CD4-positive, alpha-beta memory T cell (primary cell): ENCODE measurements at regions of chr4 and their contacts with region 1.

Region 1: DNA sequence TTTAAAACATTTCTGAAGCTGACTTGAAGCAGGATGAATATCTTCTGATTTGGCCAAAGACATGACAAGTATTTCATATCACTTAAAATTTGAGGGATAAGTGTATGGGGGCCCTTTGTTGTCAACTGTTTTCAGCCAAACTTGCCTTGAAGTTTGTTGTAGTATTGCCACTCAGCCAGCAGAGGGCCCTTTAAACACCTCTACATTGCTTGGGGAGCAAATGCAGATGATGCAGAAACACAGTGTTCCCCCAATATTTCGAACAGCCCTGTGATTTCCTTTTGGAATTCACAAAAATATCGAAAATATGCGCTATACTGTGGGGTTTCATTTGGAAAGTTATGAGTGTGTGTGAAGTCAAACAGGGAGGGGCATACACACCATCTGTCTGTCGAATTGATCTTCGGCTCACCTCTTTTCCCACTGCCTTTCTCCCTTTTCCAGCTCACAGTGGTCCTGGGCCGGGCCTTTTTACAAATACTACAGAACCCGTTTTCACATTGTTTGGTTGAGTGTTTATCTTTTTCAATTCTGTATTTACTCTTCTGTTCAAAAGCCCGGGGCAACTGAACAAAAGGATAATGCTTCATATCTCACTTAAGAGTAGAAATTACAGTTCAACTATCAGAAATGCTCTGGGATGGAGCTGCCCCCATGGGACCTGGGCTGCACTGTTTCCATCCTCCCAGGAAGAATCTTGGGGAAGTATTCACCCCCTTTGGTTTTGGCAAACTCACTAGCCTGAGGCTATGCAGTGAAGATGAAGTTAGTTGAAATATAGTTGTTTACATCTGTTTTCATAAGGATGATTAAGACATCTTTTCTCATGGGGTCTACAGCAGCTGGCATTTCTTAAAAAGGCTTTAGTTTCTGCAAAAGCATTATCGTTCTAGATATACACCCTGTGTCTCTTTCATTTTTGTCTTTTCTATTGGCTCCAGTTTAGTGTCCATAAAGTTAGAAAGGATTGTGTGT is 137.6 kb downstream of the EGF start:
- DNase-seq: peak; percentile 36 to 60 (median 50)
- H3K4me3 ChIP-seq: no peak overlapping the region
- H3K4me3 Mint-ChIP-seq: no peak overlapping the region
- H3K27ac ChIP-seq: no peak overlapping the region
- H3K27ac Mint-ChIP-seq: peak overlapping the region in 2 of 7 donors; percentile 25 to 71
- H3K4me1 ChIP-seq: no peaks in the 10 kb centered on the region
- H3K4me1 Mint-ChIP-seq: peaks cover 0 to 2% (median under 1%) of the 10 kb centered on the region in 4 donors
- H3K27me3 ChIP-seq: no peaks in the 10 kb centered on the region
- H3K27me3 Mint-ChIP-seq: no peaks in the 10 kb centered on the region

Region 2: DNA sequence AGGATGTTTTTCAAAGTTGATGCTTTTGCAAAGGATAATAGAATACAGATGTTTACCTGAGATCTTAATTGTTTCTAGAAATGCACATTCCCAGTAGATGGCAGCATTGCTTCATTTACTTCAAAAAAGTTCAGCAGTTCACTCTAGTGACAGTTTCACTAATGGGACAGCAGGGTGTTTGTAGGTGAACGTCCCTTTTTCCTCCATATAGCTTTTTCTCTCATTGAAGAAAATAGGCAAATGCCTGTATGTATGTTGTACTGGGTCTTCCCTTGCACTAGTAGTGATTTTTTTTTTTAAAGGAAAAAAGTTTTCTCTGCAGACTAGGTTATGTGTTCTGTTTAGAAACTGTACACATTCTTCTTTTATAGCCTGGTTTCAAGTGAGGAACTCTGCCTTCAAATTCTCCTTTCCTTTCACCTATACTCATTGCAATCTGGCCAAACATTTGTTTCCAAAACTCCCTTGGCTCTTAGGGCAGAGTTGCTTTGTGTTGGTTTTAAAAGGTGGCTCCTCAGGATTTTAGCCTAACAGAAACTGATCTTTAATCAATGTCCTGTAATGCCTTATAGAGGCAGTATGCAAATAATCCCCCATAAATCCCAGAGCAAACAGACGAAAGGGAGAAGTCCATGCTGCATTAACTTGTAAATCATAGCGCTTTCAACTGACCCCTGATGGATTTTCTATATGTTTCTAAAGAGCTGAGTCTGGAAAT is 51.2 kb before region 1 on chr4:
- CTCF ChIA-PET with region 1: interaction called, 11 read pairs
- POLR2A ChIA-PET with region 1: interaction called, 3 read pairs
- intact Hi-C with region 1: no loop called
- DNase-seq: peak in 4 of 5 donors; percentile 63 to 66 (median 65)
- H3K4me3 ChIP-seq: no peak overlapping the region
- H3K4me3 Mint-ChIP-seq: no peak overlapping the region
- H3K27ac ChIP-seq: no peak overlapping the region
- H3K27ac Mint-ChIP-seq: no peak overlapping the region
- H3K4me1 ChIP-seq: no peaks in the 10 kb centered on the region
- H3K4me1 Mint-ChIP-seq: peaks cover 1 to 8% (median 6%) of the 10 kb centered on the region in 4 donors
- H3K27me3 ChIP-seq: no peaks in the 10 kb centered on the region
- H3K27me3 Mint-ChIP-seq: peaks cover 9 to 11% of the 10 kb centered on the region in 2 donors

Region 3: DNA sequence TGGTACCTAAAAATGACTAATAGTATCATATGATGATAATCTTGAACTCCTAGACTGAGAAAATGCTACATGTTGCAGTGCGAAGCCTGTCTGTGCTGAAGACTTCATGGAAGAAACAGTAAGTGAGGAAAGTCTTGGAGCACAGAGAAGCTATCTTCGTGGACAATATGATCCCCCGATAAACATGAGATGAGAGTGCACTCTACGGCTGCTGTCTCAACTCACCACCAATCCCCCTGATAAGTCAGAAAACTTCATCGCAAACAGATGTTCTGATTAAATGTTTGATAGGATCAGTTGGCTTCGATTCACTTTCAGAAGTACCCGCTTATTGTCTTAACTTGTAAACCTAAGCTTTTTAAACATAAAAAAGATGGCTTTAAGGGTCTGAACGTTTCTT is 18.0 kb after region 1 on chr4:
- CTCF ChIA-PET with region 1: interaction called, 12 read pairs
- POLR2A ChIA-PET with region 1: no interaction called
- intact Hi-C with region 1: no loop called
- DNase-seq: no peak
- H3K4me3 ChIP-seq: no peak overlapping the region
- H3K4me3 Mint-ChIP-seq: no peak overlapping the region
- H3K27ac ChIP-seq: no peak overlapping the region
- H3K27ac Mint-ChIP-seq: no peak overlapping the region
- H3K4me1 ChIP-seq: no peaks in the 10 kb centered on the region
- H3K4me1 Mint-ChIP-seq: no peaks in the 10 kb centered on the region
- H3K27me3 ChIP-seq: no peaks in the 10 kb centered on the region
- H3K27me3 Mint-ChIP-seq: no peaks in the 10 kb centered on the region

Region 4: DNA sequence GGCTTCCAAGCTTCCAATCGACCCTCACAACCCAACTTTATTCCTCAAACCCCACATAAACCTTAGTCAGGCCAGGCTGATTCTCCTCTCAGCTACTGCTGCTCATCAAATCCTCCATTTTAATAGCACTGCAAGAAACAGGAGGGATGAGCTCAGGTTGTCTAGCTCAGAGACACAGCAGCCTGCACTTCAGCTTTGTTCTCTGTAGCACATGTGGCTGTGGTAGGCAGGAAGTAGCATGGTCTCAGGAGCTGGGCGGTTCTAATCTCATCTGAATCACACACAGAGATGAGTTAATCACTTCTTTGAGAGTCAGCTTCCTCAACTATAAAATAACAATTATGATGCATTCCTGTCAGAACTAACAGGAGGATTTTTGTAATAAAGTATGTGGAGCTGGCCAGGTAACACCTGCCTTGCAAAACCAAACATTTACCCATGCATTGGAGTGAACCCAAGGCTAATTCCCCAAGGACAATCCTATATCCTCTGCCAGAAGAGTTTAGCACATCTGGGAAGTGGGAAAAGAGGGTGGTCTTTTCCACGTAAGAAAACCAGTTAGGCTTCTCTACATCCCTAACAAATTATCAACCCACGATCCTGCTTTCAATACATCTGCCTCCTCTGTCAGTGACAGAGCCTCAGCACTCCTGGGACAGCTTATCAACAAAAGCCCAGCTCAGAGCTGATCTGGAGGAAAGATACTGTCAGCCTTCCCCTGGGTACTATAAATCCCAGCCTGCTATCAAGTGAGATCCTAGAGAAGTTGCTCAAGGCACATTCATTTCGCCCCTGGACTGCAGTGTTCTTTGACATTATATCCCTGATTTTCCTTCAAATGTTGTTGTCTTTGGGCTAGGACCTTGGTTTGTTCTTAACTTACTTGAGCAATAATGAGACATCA is 115.4 kb after region 1 on chr4:
- CTCF ChIA-PET with region 1: interaction called, 24 read pairs
- POLR2A ChIA-PET with region 1: interaction called, 4 read pairs
- intact Hi-C with region 1: no loop called
- DNase-seq: peak; percentile 55 to 77 (median 65)
- H3K4me3 ChIP-seq: peak overlapping the region in 1 of 2 donors; percentile 9
- H3K4me3 Mint-ChIP-seq: peak overlapping the region; percentile 52 to 92 (median 71)
- H3K27ac ChIP-seq: peak overlapping the region; percentile 29
- H3K27ac Mint-ChIP-seq: peak overlapping the region; percentile 81 to 98 (median 93)
- H3K4me1 ChIP-seq: peaks cover 30% of the 10 kb centered on the region
- H3K4me1 Mint-ChIP-seq: peaks cover 23 to 40% (median 33%) of the 10 kb centered on the region in 4 donors
- H3K27me3 ChIP-seq: no peaks in the 10 kb centered on the region
- H3K27me3 Mint-ChIP-seq: no peaks in the 10 kb centered on the region

Region 5: DNA sequence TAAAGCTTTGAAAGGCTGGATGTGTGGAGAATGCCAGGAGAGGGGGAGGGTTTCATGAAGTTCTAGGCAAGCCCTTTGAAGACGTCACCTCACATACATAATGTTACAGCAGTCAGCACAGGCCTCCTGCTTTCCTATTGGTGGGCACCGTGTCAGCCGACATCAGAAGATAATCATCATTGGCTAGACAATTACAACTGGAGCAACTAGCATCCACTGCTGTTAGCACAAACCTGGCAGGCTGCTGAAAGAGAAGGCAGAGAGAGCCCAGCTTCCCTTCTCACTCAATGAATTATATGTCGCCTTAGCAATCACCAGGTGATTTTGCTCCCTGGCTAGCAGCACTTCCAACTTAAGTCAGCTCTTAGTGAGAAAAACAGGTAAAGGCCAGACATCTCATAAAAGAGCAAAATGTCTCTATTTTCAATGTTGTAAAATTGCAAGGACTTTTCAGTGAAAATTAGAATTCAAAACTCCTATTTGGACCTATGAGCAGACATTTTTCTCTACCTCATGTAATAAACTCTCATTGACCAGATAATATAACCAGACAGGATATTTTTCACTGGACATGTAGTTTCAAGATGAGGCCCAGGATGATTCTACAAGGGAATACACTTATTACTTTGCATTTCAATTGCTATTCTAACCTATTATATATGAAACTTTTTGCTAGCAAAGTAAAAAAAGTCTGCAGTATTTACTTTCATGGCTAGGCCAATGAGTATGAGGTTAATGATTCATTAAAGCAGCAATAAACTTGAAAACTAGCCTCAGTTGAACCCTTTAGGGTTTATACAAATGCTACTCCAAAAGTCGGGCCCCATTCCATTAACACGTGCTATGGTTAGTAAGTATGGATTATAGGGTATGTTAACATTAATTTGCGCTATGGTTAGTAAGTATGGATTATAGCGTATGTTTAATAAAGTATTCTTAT is 143.9 kb after region 1 on chr4:
- CTCF ChIA-PET with region 1: interaction called, 14 read pairs
- POLR2A ChIA-PET with region 1: no interaction called
- intact Hi-C with region 1: loop called (anchors 1 kb)
- DNase-seq: peak; percentile 71 to 87 (median 78)
- H3K4me3 ChIP-seq: no peak overlapping the region
- H3K4me3 Mint-ChIP-seq: peak overlapping the region in 6 of 8 donors; percentile 12 to 40 (median 31)
- H3K27ac ChIP-seq: peak overlapping the region; percentile 21
- H3K27ac Mint-ChIP-seq: peak overlapping the region; percentile 54 to 91 (median 84)
- H3K4me1 ChIP-seq: peaks cover 27% of the 10 kb centered on the region
- H3K4me1 Mint-ChIP-seq: peaks cover 17 to 43% (median 27%) of the 10 kb centered on the region in 4 donors
- H3K27me3 ChIP-seq: no peaks in the 10 kb centered on the region
- H3K27me3 Mint-ChIP-seq: no peaks in the 10 kb centered on the region

Region 6: DNA sequence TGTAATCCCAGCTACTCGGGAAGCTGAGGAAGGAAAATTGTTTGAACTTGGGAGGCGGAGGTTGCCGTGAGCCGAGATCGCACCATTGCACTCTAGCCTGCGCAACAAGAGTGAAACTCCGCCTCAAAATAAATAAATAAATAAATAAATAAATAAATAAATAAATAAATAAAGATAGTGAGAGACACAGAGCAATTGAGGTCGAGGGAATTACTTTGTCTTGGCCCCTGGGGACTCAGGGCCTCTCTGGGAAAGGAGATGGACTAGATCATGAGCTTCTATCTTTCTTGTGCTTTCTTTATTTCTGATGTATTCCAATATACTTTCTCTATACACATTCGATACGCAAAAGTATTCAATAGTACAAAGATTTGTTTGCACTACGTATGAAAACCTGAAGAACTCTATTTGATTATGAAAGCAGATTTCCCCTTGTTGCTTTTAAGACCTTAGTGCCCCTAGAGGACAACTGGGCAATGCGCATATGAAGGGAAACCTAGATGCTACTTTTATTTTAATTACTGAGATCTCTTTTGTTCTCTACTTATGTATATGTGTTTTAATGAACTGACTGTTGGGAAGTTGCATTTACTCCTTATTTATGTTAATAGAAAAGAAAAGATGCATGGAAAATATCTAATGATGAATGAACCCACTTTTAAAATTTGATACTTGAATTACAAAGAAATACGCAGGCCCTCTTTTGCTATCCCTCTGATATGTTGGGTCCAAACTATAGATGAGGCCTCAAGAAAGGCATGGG is 160.9 kb after region 1 on chr4:
- CTCF ChIA-PET with region 1: interaction called, 179 read pairs
- POLR2A ChIA-PET with region 1: interaction called, 3 read pairs
- intact Hi-C with region 1: loop called (anchors 1 kb)
- DNase-seq: peak in 4 of 5 donors; percentile 39 to 48 (median 43)
- H3K4me3 ChIP-seq: no peak overlapping the region
- H3K4me3 Mint-ChIP-seq: peak overlapping the region in 3 of 8 donors; percentile 35 to 49 (median 36)
- H3K27ac ChIP-seq: no peak overlapping the region
- H3K27ac Mint-ChIP-seq: no peak overlapping the region
- H3K4me1 ChIP-seq: no peaks in the 10 kb centered on the region
- H3K4me1 Mint-ChIP-seq: peaks cover 0 to 5% (median 3%) of the 10 kb centered on the region in 4 donors
- H3K27me3 ChIP-seq: no peaks in the 10 kb centered on the region
- H3K27me3 Mint-ChIP-seq: peaks cover 2 to 3% of the 10 kb centered on the region in 2 donors

Region 7: DNA sequence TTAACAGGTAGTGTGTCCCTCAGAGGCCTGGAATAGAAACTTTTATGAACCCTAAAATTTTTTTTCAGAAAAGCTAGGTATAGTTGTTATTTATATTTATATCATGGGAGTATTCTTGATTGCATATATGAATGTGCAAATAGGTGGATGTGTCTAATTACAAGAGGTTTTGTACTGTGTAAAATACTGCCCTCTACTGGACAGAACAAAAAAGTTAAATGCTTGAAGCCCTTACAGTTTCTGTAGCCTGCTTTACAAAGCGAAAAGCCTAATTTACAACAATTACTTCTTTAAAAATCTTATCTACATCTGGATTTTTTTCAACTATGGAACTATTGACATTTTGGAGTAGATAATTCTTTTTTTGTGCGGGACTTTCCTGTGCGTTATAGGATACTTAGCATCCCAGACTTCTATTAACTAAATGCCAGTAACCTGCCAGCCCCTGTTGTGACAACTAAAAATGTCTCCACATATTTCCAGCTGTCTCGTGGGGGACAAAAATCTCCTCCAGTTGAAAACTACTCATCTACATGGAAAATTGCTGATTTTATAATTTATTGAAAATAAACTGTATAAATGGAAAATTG is 460.8 kb after region 1 on chr4:
- CTCF ChIA-PET with region 1: interaction called, 28 read pairs
- POLR2A ChIA-PET with region 1: no interaction called
- intact Hi-C with region 1: loop called (anchors 1 kb)
- DNase-seq: peak in 4 of 5 donors; percentile 46 to 55 (median 51)
- H3K4me3 ChIP-seq: no peak overlapping the region
- H3K4me3 Mint-ChIP-seq: no peak overlapping the region
- H3K27ac ChIP-seq: no peak overlapping the region
- H3K27ac Mint-ChIP-seq: no peak overlapping the region
- H3K4me1 ChIP-seq: peaks cover 11% of the 10 kb centered on the region
- H3K4me1 Mint-ChIP-seq: peaks cover 7 to 10% (median 9%) of the 10 kb centered on the region in 4 donors
- H3K27me3 ChIP-seq: no peaks in the 10 kb centered on the region
- H3K27me3 Mint-ChIP-seq: peaks cover 0 to 3% of the 10 kb centered on the region in 2 donors